ENCODE measurements at regions of chr1 and their contacts with region 1.

Region 1: GRCh38 chr1:27357281-27358037 is 9.3 kb downstream of the MAP3K6 start:
- DNase-seq: peak; percentile 75 to 85 (median 84)
- H3K4me3 ChIP-seq: peak overlapping the region in 4 of 7 experiments; percentile 19 to 73 (median 55)
- H3K27ac ChIP-seq: no peak overlapping the region
- H3K4me1 ChIP-seq: peaks cover 0 to 33% (median 19%) of the 10 kb centered on the region in 4 experiments
- H3K27me3 ChIP-seq: no peaks in the 10 kb centered on the region

Region 2: DNA sequence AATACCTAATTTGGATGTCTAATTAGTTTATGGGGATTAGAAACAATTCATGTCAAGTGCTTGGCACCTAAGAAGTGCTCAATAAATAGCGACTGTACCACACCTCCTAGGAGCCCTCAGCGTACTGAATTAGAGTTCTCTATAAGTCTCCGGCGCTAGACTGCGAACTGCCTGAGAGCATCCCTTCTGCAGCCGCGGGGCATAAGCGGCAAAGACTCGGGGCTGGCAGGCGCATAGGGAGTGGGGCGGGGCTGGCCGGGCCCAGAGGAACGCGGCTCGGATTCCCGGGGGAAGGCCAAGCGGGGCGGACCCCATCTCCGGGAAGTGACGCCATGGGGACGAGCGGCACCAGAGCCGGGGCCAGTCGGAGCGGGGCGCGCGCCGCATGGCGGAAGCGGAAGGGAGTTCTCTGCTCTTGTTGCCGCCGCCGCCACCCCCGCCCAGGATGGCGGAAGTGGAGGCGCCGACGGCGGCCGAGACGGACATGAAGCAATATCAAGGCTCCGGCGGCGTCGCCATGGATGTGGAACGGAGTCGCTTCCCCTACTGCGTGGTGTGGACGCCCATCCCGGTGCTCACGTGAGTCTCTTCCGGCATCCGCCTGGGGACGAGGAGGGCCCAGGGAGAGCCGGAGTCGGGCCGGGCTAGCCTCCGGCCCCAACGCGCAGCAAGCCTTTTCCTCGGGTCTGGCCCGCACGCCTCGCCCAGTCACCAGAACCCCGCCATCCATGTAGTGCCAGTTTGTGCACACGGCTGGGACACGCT is 35.5 kb before region 1 on chr1 and contains the start of gene TMEM222:
- CTCF ChIA-PET with region 1: interaction called, 13 read pairs
- POLR2A ChIA-PET with region 1: no interaction called
- DNase-seq: peak; percentile 98 to 99 (median 98)
- H3K4me3 ChIP-seq: peak within 1 kb of the TSS; percentile 74 to 100 (median 99)
- H3K27ac ChIP-seq: peak within 1 kb of the TSS; percentile 97 to 98
- H3K4me1 ChIP-seq: peaks cover 10 to 19% (median 14%) of the 10 kb centered on the region in 4 experiments
- H3K27me3 ChIP-seq: peaks cover 0 to 3% (median 2%) of the 10 kb centered on the region in 5 experiments

Region 3: DNA sequence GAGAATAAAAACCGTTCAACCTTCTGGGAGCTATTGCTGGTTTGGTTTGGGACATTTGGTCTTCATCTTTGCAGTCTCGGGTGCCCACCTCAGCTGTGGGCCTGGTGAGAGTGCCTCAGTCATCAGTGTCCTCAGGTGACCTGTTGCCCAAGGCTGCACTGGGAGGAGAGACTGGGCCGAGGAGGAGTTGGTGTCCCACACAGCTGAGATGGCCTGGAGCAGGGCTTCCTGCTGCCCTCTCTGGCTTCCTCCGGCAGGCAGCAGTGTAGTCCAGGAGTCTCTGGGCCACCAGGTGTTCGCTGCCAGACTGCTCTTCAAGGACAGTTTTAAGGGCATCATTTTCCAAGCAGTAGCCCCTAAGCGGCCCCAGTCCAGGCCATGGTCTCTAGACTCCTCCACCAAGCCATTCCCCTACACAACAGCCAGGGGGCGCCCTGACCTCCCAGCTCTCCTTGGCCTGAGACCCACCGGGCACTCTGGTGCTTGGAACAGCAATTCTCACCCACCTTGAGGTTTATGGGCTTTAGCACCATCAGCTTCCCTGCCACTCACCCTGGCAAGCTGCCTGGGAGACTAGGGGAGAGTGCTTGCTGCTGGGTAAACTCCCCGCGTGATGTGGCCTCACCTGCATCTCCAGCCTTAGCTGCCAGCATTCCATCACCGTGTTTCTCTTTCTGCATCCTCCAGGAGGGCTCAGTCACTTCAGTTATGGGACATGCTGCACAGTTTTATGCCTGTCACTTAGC is 24.8 kb before region 1 on chr1:
- CTCF ChIA-PET with region 1: interaction called, 22 read pairs
- POLR2A ChIA-PET with region 1: no interaction called
- DNase-seq: peak in 2 of 3 donors; percentile 64
- H3K4me3 ChIP-seq: no peak overlapping the region
- H3K27ac ChIP-seq: no peak overlapping the region
- H3K4me1 ChIP-seq: no peaks in the 10 kb centered on the region
- H3K27me3 ChIP-seq: no peaks in the 10 kb centered on the region

Region 4: DNA sequence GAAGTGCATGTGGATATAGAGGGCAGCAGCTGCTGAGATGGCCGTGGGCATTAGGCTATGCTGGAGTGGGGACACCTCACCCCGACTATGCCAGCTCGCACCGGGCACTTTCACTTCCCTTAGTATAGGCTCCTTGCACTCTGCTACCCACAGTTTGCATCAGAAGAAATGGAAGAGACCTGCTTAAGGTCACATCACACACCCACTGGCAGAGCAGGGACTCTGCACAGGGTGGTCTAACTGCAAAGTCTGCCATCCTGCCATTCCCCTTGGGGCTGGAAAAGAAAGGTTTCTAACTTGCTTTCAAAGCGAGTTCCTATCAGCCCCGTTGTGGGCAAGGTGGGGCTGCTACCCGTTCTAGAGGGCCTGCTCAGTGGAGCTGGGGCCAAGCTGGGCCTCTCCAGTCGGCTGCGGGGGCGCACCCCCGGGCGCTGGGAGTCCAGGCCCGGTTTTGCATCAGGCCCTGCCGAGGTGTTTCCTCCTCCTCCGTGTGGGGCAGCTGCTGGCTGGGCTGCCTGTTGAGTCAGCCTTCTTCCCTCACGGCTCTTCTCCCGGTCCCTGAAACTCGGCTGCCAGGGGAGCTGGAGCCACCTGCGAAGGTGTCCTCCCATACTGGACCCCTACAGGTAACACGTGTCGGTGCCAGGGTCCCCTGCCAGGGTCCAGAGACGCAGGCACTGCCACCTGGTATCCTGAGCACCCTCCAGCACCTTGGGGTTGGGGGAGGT is 15.8 kb before region 1 on chr1 and contains the start of gene SYTL1:
- CTCF ChIA-PET with region 1: interaction called, 102 read pairs
- POLR2A ChIA-PET with region 1: interaction called, 4 read pairs
- DNase-seq: peak; percentile 68 to 88 (median 82)
- H3K4me3 ChIP-seq: peak within 1 kb of the TSS; percentile 56 to 93 (median 83)
- H3K27ac ChIP-seq: peak within 1 kb of the TSS; percentile 50 to 84
- H3K4me1 ChIP-seq: peaks cover 3 to 56% (median 36%) of the 10 kb centered on the region in 4 experiments
- H3K27me3 ChIP-seq: no peaks in the 10 kb centered on the region

Region 5: GRCh38 chr1:27383039-27383605 is 25.7 kb after region 1 on chr1 and contains the start of gene CD164L2:
- CTCF ChIA-PET with region 1: interaction called, 29 read pairs
- POLR2A ChIA-PET with region 1: no interaction called
- DNase-seq: peak in 1 of 3 donors; percentile 40
- H3K4me3 ChIP-seq: no peak within 1 kb of the TSS
- H3K27ac ChIP-seq: no peak within 1 kb of the TSS
- H3K4me1 ChIP-seq: peaks cover 0 to 7% (median 5%) of the 10 kb centered on the region in 4 experiments
- H3K27me3 ChIP-seq: peaks cover 0 to 4% (median 0%) of the 10 kb centered on the region in 5 experiments

Region 6: DNA sequence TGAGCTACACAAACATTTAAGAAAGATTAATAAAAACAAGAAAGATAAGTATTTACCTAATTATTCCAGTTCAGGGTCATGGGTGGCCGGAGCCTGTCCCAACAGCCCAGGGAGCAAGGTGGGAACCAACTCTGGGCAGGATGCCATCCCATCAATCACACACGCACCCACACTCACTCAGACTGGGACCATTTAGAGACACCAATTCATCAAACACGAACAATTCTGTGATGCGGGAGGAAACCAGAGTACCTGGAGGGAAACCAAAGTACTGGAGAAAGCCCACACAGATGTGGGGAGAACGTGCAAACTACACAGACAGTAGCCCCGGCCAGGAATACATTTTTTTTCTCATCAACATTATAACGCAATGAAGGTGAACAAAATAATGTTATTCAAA is 116.3 kb after region 1 on chr1:
- CTCF ChIA-PET with region 1: no interaction called
- POLR2A ChIA-PET with region 1: no interaction called
- DNase-seq: peak in 1 of 3 donors; percentile 23
- H3K4me3 ChIP-seq: peak overlapping the region in 3 of 7 experiments; percentile 8 to 38 (median 29)
- H3K27ac ChIP-seq: no peak overlapping the region
- H3K4me1 ChIP-seq: peaks cover 3 to 28% (median 13%) of the 10 kb centered on the region in 4 experiments
- H3K27me3 ChIP-seq: no peaks in the 10 kb centered on the region